ENCODE measurements at regions of chr2 and their contacts with region 1.

Region 1: GRCh38 chr2:136874258-136874657 is 108.9 kb downstream of the THSD7B start:
- DNase-seq: peak; percentile 4
- H3K4me3 ChIP-seq: no peak overlapping the region
- H3K27ac ChIP-seq: no peak overlapping the region
- H3K4me1 ChIP-seq: no peaks in the 10 kb centered on the region
- H3K27me3 ChIP-seq: no peaks in the 10 kb centered on the region
- CTCF ChIP-seq: peak in 1 of 2 donors; percentile 31
- POLR2A ChIP-seq: no peak

Region 2: GRCh38 chr2:136394136-136395060 is 479.9 kb before region 1 on chr2:
- CTCF ChIA-PET with region 1: no interaction called
- POLR2A ChIA-PET with region 1: interaction called, 10 read pairs
- dilution Hi-C with region 1: no loop called
- intact Hi-C with region 1: no loop called
- DNase-seq: no peak
- H3K4me3 ChIP-seq: no peak overlapping the region
- H3K27ac ChIP-seq: no peak overlapping the region
- H3K4me1 ChIP-seq: no peaks in the 10 kb centered on the region
- H3K27me3 ChIP-seq: peaks cover 0 to 3% of the 10 kb centered on the region in 2 experiments
- CTCF ChIP-seq: no peak
- POLR2A ChIP-seq: no peak

Region 3: GRCh38 chr2:136920652-136921333 is 46.5 kb after region 1 on chr2:
- CTCF ChIA-PET with region 1: no interaction called
- POLR2A ChIA-PET with region 1: no interaction called
- dilution Hi-C with region 1: no loop called
- intact Hi-C with region 1: loop called (anchors 1 kb)
- DNase-seq: no peak
- H3K4me3 ChIP-seq: no peak overlapping the region
- H3K27ac ChIP-seq: no peak overlapping the region
- H3K4me1 ChIP-seq: no peaks in the 10 kb centered on the region
- H3K27me3 ChIP-seq: no peaks in the 10 kb centered on the region
- CTCF ChIP-seq: no peak
- POLR2A ChIP-seq: no peak

Region 4: GRCh38 chr2:137050949-137051348 is 176.7 kb after region 1 on chr2:
- CTCF ChIA-PET with region 1: interaction called, 4 read pairs
- POLR2A ChIA-PET with region 1: no interaction called
- dilution Hi-C with region 1: no loop called
- intact Hi-C with region 1: loop called (anchors 1 kb)
- DNase-seq: peak; percentile 10
- H3K4me3 ChIP-seq: no peak overlapping the region
- H3K27ac ChIP-seq: no peak overlapping the region
- H3K4me1 ChIP-seq: no peaks in the 10 kb centered on the region
- H3K27me3 ChIP-seq: no peaks in the 10 kb centered on the region
- CTCF ChIP-seq: peak in 1 of 2 donors; percentile 8
- POLR2A ChIP-seq: no peak

Region 5: GRCh38 chr2:137838255-137839092 is 964.2 kb after region 1 on chr2:
- CTCF ChIA-PET with region 1: interaction called, 5 read pairs
- POLR2A ChIA-PET with region 1: no interaction called
- dilution Hi-C with region 1: no loop called
- intact Hi-C with region 1: loop called (anchors 1 kb)
- DNase-seq: peak; percentile 50
- H3K4me3 ChIP-seq: no peak overlapping the region
- H3K27ac ChIP-seq: no peak overlapping the region
- H3K4me1 ChIP-seq: no peaks in the 10 kb centered on the region
- H3K27me3 ChIP-seq: no peaks in the 10 kb centered on the region
- CTCF ChIP-seq: peak; percentile 18 to 33
- POLR2A ChIP-seq: no peak